Activated CD4-positive, alpha-beta T cell treated with anti-CD3 and anti-CD28 coated beads for 36 hours (primary cell): ENCODE measurements at regions of chr6 and their contacts with region 1.

Region 1: DNA sequence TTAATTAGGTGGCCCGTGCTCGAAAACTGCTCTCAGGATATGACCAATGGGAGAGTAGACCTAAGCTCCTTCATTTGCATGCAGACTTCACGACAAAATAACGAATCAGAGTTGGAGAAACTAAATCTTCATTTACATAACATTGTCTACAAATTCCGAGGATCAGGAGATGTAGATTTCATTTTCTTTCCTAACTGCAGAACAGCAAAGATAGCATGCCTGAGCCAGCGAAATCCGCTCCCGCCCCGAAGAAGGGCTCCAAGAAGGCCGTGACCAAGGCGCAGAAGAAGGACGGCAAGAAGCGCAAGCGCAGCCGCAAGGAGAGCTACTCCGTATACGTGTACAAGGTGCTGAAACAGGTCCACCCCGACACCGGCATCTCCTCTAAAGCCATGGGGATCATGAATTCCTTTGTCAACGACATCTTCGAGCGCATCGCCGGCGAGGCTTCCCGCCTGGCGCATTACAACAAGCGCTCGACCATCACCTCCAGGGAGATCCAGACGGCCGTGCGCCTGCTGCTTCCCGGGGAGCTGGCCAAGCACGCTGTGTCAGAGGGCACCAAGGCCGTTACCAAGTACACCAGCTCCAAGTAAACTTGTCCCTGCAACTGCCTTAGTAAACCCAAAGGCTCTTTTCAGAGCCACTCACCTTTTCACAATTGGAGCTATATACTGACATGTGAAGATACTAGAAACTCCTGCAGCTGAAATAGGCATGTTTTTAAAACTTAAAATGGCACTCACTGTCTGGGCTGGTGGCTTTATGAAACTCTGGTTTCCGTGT is 96.5 kb downstream of the HFE start:
- DNase-seq: peak; percentile 82
- ATAC-seq: peak; percentile 80
- H3K4me3 Mint-ChIP-seq: peak overlapping the region; percentile 89
- H3K27ac Mint-ChIP-seq: peak overlapping the region; percentile 92
- H3K4me1 Mint-ChIP-seq: peaks cover 45% of the 10 kb centered on the region
- H3K27me3 Mint-ChIP-seq: no peaks in the 10 kb centered on the region

Region 2: GRCh38 chr6:26249957-26250697 is 66.4 kb after region 1 on chr6:
- CTCF ChIA-PET with region 1: interaction called, 13 read pairs
- POLR2A ChIA-PET with region 1: interaction called, 16 read pairs
- intact Hi-C with region 1: no loop called
- DNase-seq: peak; percentile 85
- ATAC-seq: peak; percentile 63
- H3K4me3 Mint-ChIP-seq: peak overlapping the region; percentile 86
- H3K27ac Mint-ChIP-seq: peak overlapping the region; percentile 97
- H3K4me1 Mint-ChIP-seq: peaks cover 14% of the 10 kb centered on the region
- H3K27me3 Mint-ChIP-seq: no peaks in the 10 kb centered on the region

Region 3: GRCh38 chr6:26394289-26394688 is 210.5 kb after region 1 on chr6:
- CTCF ChIA-PET with region 1: no interaction called
- POLR2A ChIA-PET with region 1: no interaction called
- intact Hi-C with region 1: no loop called
- DNase-seq: no peak
- ATAC-seq: no peak
- H3K4me3 Mint-ChIP-seq: no peak overlapping the region
- H3K27ac Mint-ChIP-seq: no peak overlapping the region
- H3K4me1 Mint-ChIP-seq: peaks cover 1% of the 10 kb centered on the region
- H3K27me3 Mint-ChIP-seq: no peaks in the 10 kb centered on the region